Lower leg skin (tissue), 4 donors: ENCODE measurements at regions of chr17 and their contacts with region 1.

Region 1: GRCh38 chr17:44775136-44775837 is 16.5 kb downstream of the ADAM11 start:
- DNase-seq: peak; percentile 96 to 99
- H3K4me3 ChIP-seq: peak overlapping the region; percentile 19
- CTCF ChIP-seq: no peak
- POLR2A ChIP-seq: no peak

Region 2: GRCh38 chr17:44863061-44863918 is 88.0 kb after region 1 on chr17:
- intact Hi-C with region 1: loop called (anchors 2 kb)
- DNase-seq: no peak
- H3K4me3 ChIP-seq: no peak overlapping the region
- CTCF ChIP-seq: no peak
- POLR2A ChIP-seq: no peak